ENCODE measurements at regions of chr6 and their contacts with region 1.

Region 1: GRCh38 chr6:31958741-31959739 is at the starts of genes NELFE and SKIC2:
- DNase-seq: peak; percentile 99
- H3K4me3 ChIP-seq: peak within 1 kb of the TSS; percentile 88
- H3K27ac ChIP-seq: peak within 1 kb of the TSS; percentile 88
- H3K4me1 ChIP-seq: peaks cover 14% of the 10 kb centered on the region
- H3K27me3 ChIP-seq: no peaks in the 10 kb centered on the region
- CTCF ChIP-seq: no peak
- total RNA-seq, gene NELFE: 94.3 and 96.8 TPM in 2 replicates
- total RNA-seq, gene SKIC2: 64.2 and 71.3 TPM in 2 replicates

Region 2: DNA sequence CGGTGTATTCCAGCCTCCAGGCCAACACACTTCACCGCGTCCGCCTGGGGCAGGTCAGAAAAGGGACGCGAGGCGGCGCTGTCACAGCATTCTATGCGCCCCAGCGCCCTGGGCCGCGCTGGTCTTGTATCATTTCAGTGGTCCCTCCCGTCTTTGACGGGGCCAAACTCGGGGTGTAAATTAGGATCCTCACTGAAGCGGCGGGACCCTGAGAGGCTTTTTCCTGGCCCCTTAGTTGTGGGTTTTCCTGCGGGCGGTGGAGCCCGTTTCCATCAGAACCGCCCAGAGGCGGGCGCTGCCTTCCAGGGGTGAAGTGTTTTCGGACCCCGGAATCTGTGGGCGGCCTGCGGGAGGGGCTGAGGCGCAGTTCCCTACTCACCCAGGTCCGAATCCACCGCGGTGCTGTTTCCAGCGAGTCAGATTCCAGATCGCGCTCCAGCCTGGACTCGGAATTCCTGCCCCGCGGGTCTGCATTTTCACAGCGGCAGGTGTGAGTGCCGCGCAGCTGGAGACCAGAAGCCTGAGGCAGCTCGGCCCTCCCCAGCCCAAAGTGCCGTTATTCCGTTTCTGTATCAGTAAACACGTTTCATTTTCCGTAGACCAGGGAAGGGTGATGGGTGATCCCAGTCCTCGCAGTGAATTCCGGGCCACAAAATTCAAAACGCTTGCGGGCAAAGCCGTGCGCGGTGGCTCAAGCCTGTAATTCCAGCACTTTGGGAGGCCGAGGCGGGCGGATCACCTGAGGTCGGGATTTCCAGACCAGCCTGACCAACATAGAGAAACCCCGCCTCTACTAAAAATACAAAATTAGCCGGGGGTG is 465.0 kb before region 1 on chr6:
- CTCF ChIA-PET with region 1: no interaction called
- POLR2A ChIA-PET with region 1: no interaction called
- intact Hi-C with region 1: no loop called
- DNase-seq: peak; percentile 91
- H3K4me3 ChIP-seq: peak overlapping the region; percentile 78
- H3K27ac ChIP-seq: peak overlapping the region; percentile 64
- H3K4me1 ChIP-seq: peaks cover 7% of the 10 kb centered on the region
- H3K27me3 ChIP-seq: no peaks in the 10 kb centered on the region
- CTCF ChIP-seq: peak; percentile 98

Region 3: GRCh38 chr6:31680840-31681671 is 278.0 kb before region 1 on chr6 and contains the start of gene LY6G5C:
- CTCF ChIA-PET with region 1: no interaction called
- POLR2A ChIA-PET with region 1: no interaction called
- intact Hi-C with region 1: loop called (anchors 10 kb)
- DNase-seq: peak; percentile 86
- H3K4me3 ChIP-seq: peak within 1 kb of the TSS; percentile 53
- H3K27ac ChIP-seq: peak within 1 kb of the TSS; percentile 68
- H3K4me1 ChIP-seq: no peaks in the 10 kb centered on the region
- H3K27me3 ChIP-seq: no peaks in the 10 kb centered on the region
- CTCF ChIP-seq: peak; percentile 70; the same call in 1 of the 2 replicates
- total RNA-seq, gene LY6G5C: 3.9 and 6.8 TPM in 2 replicates

Region 4: DNA sequence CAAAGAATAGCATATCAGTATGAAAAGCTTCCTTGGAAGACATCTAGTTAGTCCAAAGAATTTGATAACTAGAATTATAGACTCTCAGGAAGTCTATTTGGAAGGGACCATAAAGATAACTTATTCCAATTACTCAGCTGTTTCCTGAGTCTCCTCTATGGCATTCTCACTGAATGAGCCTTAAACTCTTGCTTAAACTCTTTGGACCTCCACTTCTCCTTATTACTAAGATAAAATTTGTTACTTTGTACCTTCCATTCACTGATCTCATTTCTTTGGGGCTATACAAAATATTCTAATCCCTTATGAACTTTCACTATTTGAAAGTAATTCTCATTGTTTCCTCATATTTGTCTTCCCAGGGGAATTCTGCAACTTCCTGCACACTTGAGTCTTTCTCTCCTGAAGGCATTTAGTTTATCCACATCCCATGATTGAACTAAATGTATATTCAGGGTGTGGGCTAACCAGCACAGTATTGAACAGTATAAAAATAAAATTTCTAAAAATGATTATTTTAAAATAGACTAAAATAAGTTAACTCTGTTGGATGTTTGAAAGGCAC is 331.9 kb after region 1 on chr6:
- CTCF ChIA-PET with region 1: no interaction called
- POLR2A ChIA-PET with region 1: no interaction called
- intact Hi-C with region 1: no loop called
- DNase-seq: peak; percentile 85
- H3K4me3 ChIP-seq: no peak overlapping the region
- H3K27ac ChIP-seq: no peak overlapping the region
- H3K4me1 ChIP-seq: peaks cover 20% of the 10 kb centered on the region
- H3K27me3 ChIP-seq: no peaks in the 10 kb centered on the region
- CTCF ChIP-seq: no peak